PC-3 (cell line): ENCODE measurements at regions of chr3 and their contacts with region 1.

Region 1: GRCh38 chr3:186783073-186783730 is at the start of gene EIF4A2:
- DNase-seq: peak; percentile 91
- ATAC-seq: peak; percentile 71
- H3K4me3 ChIP-seq: peak within 1 kb of the TSS; percentile 100
- H3K27ac ChIP-seq: peak within 1 kb of the TSS; percentile 73
- H3K4me1 ChIP-seq: peaks cover 31% of the 10 kb centered on the region
- H3K27me3 ChIP-seq: no peaks in the 10 kb centered on the region
- CTCF ChIP-seq: no peak
- total RNA-seq, gene EIF4A2: 204 and 233 TPM in 2 replicates

Region 2: GRCh38 chr3:186108941-186109865 is 674.0 kb before region 1 on chr3 and contains the start of gene ETV5:
- CTCF ChIA-PET with region 1: no interaction called
- POLR2A ChIA-PET with region 1: no interaction called
- intact Hi-C with region 1: loop called (anchors 10 kb)
- DNase-seq: peak; percentile 99
- ATAC-seq: peak; percentile 90
- H3K4me3 ChIP-seq: peak within 1 kb of the TSS; percentile 96
- H3K27ac ChIP-seq: peak within 1 kb of the TSS; percentile 56
- H3K4me1 ChIP-seq: peaks cover 21% of the 10 kb centered on the region
- H3K27me3 ChIP-seq: no peaks in the 10 kb centered on the region
- CTCF ChIP-seq: no peak
- total RNA-seq, gene ETV5: 41.4 and 60.6 TPM in 2 replicates

Region 3: DNA sequence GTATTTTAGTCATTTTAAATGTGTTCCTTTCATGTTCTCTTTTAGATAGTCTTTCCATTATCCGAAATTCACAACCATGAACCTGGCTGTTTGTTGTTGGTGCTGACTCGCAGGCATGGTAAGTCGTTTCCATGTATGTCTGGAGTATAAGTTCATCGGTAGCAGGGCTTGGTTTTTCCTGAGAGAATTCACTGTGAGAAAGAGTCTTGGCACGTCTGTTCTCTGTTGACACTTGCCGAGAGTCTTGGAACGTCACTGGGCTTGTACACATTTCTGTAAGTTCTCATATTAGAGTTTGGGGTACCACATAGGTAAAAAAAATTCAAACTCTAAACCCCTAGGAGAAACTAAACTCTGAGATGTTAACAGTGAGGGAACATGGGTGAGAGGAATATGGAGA is 29.2 kb before region 1 on chr3:
- CTCF ChIA-PET with region 1: no interaction called
- POLR2A ChIA-PET with region 1: no interaction called
- intact Hi-C with region 1: loop called (anchors 2 kb)
- DNase-seq: no peak
- ATAC-seq: no peak
- H3K4me3 ChIP-seq: 0 out of 2 replicates have a peak overlapping the region, but pooled peaks have one; percentile 47
- H3K27ac ChIP-seq: peak overlapping the region; percentile 88
- H3K4me1 ChIP-seq: peaks cover 17% of the 10 kb centered on the region
- H3K27me3 ChIP-seq: no peaks in the 10 kb centered on the region
- CTCF ChIP-seq: no peak